CD8-positive, alpha-beta T cell (primary cell): ENCODE measurements at regions of chr11 and their contacts with region 1.

Region 1: GRCh38 chr11:34825670-34826383 is 90.4 kb downstream of the APIP start:
- DNase-seq: no peak
- ATAC-seq: no peak
- H3K4me3 ChIP-seq: no peak overlapping the region
- H3K4me3 Mint-ChIP-seq: no peak overlapping the region
- H3K27ac ChIP-seq: no peak overlapping the region
- H3K27ac Mint-ChIP-seq: no peak overlapping the region
- H3K4me1 ChIP-seq: no peaks in the 10 kb centered on the region
- H3K4me1 Mint-ChIP-seq: no peaks in the 10 kb centered on the region
- H3K27me3 ChIP-seq: no peaks in the 10 kb centered on the region
- H3K27me3 Mint-ChIP-seq: peaks cover 8% of the 10 kb centered on the region
- CTCF ChIP-seq: no peak

Region 2: GRCh38 chr11:34600339-34601084 is 225.3 kb before region 1 on chr11:
- CTCF ChIA-PET with region 1: no interaction called
- POLR2A ChIA-PET with region 1: no interaction called
- intact Hi-C with region 1: loop called in 1 of 2 experiments (anchors 5 kb)
- DNase-seq: no peak
- ATAC-seq: no peak
- H3K4me3 ChIP-seq: no peak overlapping the region
- H3K4me3 Mint-ChIP-seq: no peak overlapping the region
- H3K27ac ChIP-seq: no peak overlapping the region
- H3K27ac Mint-ChIP-seq: no peak overlapping the region
- H3K4me1 ChIP-seq: peaks cover 11% of the 10 kb centered on the region
- H3K4me1 Mint-ChIP-seq: peaks cover 5% of the 10 kb centered on the region
- H3K27me3 ChIP-seq: no peaks in the 10 kb centered on the region
- H3K27me3 Mint-ChIP-seq: peaks cover 13% of the 10 kb centered on the region
- CTCF ChIP-seq: no peak

Region 3: GRCh38 chr11:35412285-35412684 is 586.5 kb after region 1 on chr11:
- CTCF ChIA-PET with region 1: no interaction called
- POLR2A ChIA-PET with region 1: no interaction called
- intact Hi-C with region 1: no loop called
- DNase-seq: peak in 1 of 9 experiments; percentile 14
- ATAC-seq: no peak
- H3K4me3 ChIP-seq: no peak overlapping the region
- H3K4me3 Mint-ChIP-seq: no peak overlapping the region
- H3K27ac ChIP-seq: no peak overlapping the region
- H3K27ac Mint-ChIP-seq: no peak overlapping the region
- H3K4me1 ChIP-seq: no peaks in the 10 kb centered on the region
- H3K4me1 Mint-ChIP-seq: no peaks in the 10 kb centered on the region
- H3K27me3 ChIP-seq: peaks cover 3 to 5% of the 10 kb centered on the region in 2 experiments
- H3K27me3 Mint-ChIP-seq: peaks cover 40% of the 10 kb centered on the region
- CTCF ChIP-seq: peak; percentile 17